A673 (cell line): ENCODE measurements at regions of chr9 and their contacts with region 1.

Region 1: GRCh38 chr9:131084661-131085369 is 11.5 kb upstream of the AIF1L start:
- DNase-seq: no peak
- H3K4me3 ChIP-seq: no peak overlapping the region
- H3K27ac ChIP-seq: no peak overlapping the region
- H3K4me1 ChIP-seq: no peaks in the 10 kb centered on the region
- H3K27me3 ChIP-seq: peaks cover 7% of the 10 kb centered on the region
- CTCF ChIP-seq: no peak

Region 2: DNA sequence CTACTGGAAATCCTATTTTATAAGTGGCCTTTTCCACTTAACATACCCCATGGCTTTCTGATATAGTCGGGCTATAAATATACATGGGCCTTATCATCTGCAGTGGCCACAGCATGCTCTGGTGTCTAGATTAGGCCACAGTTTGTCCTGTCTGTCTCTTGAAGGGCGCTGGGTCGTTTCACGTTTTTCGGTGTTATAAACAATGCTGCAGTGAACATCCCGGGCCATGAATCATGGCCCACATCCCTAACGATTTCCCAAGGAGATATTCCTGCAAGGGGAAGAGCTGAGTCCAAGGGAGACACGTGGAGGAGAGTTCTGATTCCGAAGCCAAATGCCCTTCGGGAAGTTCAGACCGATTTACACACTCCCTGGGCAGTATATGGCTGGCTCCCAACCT is 213.1 kb after region 1 on chr9:
- CTCF ChIA-PET with region 1: interaction called, 15 read pairs
- POLR2A ChIA-PET with region 1: no interaction called
- intact Hi-C with region 1: no loop called
- DNase-seq: no peak
- H3K4me3 ChIP-seq: no peak overlapping the region
- H3K27ac ChIP-seq: no peak overlapping the region
- H3K4me1 ChIP-seq: no peaks in the 10 kb centered on the region
- H3K27me3 ChIP-seq: no peaks in the 10 kb centered on the region
- CTCF ChIP-seq: no peak